Right cardiac atrium (tissue), 5 donors: ENCODE measurements at regions of chr4 and their contacts with region 1.

Region 1: GRCh38 chr4:154018659-154019058 is 229.8 kb upstream of the SFRP2 start:
- DNase-seq: no peak
- ATAC-seq: peak in 1 of 2 donors; percentile 41
- H3K4me3 ChIP-seq: no peak overlapping the region
- H3K27ac ChIP-seq: no peak overlapping the region
- H3K4me1 ChIP-seq: no peaks in the 10 kb centered on the region
- H3K27me3 ChIP-seq: no peaks in the 10 kb centered on the region

Region 2: DNA sequence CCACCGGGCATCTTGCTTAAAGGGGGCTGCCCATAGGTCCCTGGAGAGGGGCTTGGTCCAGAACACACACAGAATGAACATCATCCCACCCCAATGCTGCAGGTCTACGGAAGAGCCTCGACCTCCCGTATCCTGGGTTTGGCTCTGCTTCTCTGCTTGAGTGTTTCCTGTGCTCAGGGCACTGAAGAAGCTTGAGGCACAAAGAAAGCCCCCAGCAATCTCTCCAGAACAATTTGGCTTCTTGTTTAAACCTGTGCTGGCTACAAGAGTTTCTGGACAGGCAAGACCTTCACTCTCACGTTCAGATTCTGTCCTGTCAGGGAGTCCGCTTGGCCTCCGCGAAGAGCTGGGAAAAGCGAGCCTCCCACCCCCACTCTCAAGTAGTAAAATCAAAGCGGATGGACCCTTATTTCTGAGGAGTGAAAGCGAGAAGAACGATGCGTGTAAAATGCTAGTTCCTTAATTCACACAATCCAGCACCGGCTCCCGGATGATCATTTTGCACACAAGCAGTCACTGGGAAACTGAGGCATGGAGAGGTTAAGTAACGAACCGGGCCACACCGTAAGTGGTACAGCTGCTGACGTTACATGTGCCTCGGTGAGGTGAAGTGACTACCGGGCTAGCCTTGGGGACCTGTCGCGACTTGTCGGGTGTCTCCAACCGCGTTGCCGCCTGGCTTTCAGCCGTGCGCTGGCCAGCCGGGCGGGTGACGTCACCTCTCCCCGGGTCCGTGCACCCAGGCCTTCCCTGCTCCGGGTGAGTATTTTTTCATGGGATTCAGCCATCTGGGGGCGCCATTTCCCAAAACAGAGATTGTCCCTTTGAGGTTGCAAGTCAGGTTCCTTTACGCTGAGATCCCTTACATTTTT is 226.7 kb before region 1 on chr4:
- intact Hi-C with region 1: loop called in 3 of 4 experiments (anchors 5 to 10 kb)
- DNase-seq: peak; percentile 68 to 82 (median 81)
- ATAC-seq: peak; percentile 58 to 71
- H3K4me3 ChIP-seq: peak overlapping the region; percentile 8
- H3K27ac ChIP-seq: no peak overlapping the region
- H3K4me1 ChIP-seq: no peaks in the 10 kb centered on the region
- H3K27me3 ChIP-seq: no peaks in the 10 kb centered on the region